IMR-90 (cell line): ENCODE measurements at regions of chr6 and their contacts with region 1.

Region 1: GRCh38 chr6:136262940-136263339 is 12.8 kb upstream of the MTFR2 start:
- DNase-seq: no peak
- ATAC-seq: no peak
- H3K4me3 ChIP-seq: no peak overlapping the region
- H3K27ac ChIP-seq: peak overlapping the region; percentile 16; the same call in 1 of the 2 replicates
- H3K4me1 ChIP-seq: peaks cover 3% of the 10 kb centered on the region; the same call in 1 of the 2 replicates
- H3K27me3 ChIP-seq: no peaks in the 10 kb centered on the region
- CTCF ChIP-seq: no peak
- POLR2A ChIP-seq: no peak
- RAD21 ChIP-seq: no peak

Region 2: DNA sequence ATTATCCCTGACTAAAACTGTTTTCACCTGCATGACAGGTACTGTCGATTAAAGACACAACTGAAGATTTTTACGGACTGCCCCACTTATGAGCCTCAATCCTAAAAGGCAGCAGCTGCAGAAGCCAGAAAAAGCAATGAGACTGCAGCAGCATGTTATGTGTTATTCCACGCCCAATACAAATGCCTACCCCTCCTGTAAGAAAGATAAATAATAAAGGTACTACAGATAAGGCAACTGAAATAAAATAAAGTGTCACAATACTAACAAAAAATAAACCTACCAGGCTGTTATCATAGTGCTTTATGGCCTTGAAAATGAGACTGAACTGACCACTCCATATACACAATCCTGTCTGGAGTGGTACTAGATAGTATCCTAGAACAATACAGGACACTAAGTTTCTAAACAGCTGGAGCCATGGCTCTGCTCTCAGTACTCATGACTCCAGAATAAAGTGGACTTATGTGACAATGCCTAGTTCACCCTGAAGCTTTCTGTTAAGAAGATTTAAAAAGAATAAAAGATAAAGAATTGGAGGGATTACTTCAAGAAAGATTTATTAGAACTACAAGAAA is 17.2 kb after region 1 on chr6:
- CTCF ChIA-PET with region 1: no interaction called
- POLR2A ChIA-PET with region 1: no interaction called
- dilution Hi-C with region 1: no loop called
- in situ Hi-C with region 1: no loop called
- intact Hi-C with region 1: loop called (anchors 2 kb)
- DNase-seq: no peak
- ATAC-seq: no peak
- H3K4me3 ChIP-seq: no peak overlapping the region
- H3K27ac ChIP-seq: no peak overlapping the region
- H3K4me1 ChIP-seq: peaks cover 6% of the 10 kb centered on the region
- H3K27me3 ChIP-seq: no peaks in the 10 kb centered on the region
- CTCF ChIP-seq: no peak
- POLR2A ChIP-seq: no peak
- RAD21 ChIP-seq: no peak